Panc1 (cell line): ENCODE measurements at regions of chr20 and their contacts with region 1.

Region 1: GRCh38 chr20:50054626-50055511 is 58.1 kb downstream of the UBE2V1 start:
- DNase-seq: no peak
- ATAC-seq: peak; percentile 47
- H3K4me3 ChIP-seq: no peak overlapping the region
- H3K27ac ChIP-seq: peak overlapping the region; percentile 37; the same call in 1 of the 2 replicates
- H3K4me1 ChIP-seq: peaks cover 7% of the 10 kb centered on the region
- H3K27me3 ChIP-seq: no peaks in the 10 kb centered on the region
- CTCF ChIP-seq: no peak

Region 2: DNA sequence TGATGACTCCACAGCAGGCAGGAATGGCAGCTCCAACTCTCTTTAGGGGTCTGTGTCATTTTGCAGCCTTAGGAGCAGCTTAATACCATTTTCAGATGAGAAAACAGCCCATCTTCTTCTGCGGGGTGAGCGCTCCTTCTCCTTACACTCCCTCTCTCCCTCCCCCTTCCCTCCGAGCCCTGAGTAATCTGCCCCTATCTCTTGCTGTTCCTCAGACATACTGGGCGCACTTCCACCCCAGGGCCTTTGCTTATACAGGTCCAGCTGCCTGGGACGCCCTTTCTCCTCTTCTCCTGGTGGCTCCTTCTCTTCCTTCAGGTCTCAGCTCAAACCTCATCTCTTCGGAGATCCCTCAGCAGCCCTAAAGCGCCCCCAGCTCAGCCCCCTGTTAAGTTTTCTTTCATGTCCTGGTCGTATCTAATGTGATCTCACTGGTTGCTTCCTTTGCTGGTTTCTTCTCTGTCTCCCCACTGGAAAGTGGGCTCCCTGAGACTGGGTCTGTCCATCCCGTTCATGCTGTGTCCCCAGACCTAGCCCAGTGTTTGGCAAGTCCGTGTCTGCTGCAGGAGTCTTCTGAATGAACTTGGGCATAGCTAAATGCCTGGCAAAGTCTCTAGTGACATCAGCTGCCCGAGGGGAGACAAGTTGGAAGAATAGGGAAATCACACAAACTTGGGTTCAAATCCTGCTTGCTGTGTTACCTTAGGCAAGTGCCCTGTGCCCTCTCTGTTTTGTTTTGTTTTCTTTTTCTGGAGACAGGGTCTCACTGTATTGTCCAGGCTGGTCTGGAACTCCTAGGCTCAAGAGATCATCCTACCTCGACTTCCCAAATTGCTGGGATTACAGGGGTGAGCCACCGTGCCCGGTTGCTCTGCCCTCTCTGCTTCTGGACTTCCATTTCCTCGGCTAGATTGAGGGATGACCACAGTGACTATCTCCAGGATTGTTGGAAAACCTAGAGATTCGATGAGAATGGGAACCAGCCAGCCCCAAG is 17.0 kb before region 1 on chr20:
- CTCF ChIA-PET with region 1: interaction called, 9 read pairs
- POLR2A ChIA-PET with region 1: interaction called, 17 read pairs
- in situ Hi-C with region 1: no loop called
- intact Hi-C with region 1: no loop called
- DNase-seq: no peak
- ATAC-seq: no peak
- H3K4me3 ChIP-seq: no peak overlapping the region
- H3K27ac ChIP-seq: no peak overlapping the region
- H3K4me1 ChIP-seq: peaks cover 13% of the 10 kb centered on the region
- H3K27me3 ChIP-seq: no peaks in the 10 kb centered on the region
- CTCF ChIP-seq: no peak

Region 3: DNA sequence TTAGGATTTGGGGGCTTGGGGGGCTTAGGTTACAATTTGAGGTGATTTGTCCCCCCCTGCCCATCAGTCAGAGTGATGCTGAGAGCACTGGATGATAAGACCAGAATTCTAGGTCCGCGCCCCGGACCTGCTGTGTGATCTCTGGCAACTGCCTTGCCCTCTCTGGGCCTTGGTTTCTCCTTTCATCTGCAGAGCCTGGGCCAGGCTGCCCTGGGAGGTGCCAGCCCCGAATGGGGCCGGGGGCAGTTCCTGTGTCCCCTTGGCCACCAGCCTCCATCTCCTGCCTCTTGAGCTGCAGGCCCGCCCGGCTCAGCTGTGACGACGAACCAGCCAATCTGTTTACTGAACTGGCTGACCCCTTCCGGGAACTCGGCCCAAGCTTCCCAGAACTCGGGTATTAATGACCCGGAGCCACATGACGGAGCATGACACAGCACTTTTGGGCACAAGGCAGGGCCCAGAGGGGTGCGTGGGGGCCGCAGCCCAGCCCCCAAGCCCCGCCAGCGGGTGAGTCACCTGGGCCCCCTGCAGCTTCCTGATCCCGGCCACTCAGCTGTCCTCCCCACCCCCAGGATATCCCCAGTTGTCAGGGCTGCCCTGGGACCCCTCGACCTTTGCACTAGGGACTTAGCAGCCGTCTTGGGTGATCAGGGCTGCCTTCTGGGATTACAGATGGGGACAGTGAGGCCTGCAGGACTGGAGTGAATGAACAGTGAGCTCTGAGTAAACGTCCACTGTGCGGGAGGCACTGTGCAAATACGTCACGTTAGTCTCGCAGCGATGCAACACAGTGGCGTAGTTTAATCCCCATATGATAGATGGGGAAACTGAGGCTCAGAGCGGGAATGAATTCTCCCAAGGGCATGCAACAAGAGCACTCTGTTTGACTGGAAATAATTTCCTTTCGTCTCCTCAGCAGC is 237.7 kb after region 1 on chr20:
- CTCF ChIA-PET with region 1: no interaction called
- POLR2A ChIA-PET with region 1: no interaction called
- in situ Hi-C with region 1: no loop called
- intact Hi-C with region 1: no loop called
- DNase-seq: no peak
- ATAC-seq: peak; percentile 62
- H3K4me3 ChIP-seq: no peak overlapping the region
- H3K27ac ChIP-seq: peak overlapping the region; percentile 75
- H3K4me1 ChIP-seq: peaks cover 16% of the 10 kb centered on the region
- H3K27me3 ChIP-seq: no peaks in the 10 kb centered on the region
- CTCF ChIP-seq: no peak